ENCODE measurements at regions of chr19 and their contacts with region 1.

Region 1: DNA sequence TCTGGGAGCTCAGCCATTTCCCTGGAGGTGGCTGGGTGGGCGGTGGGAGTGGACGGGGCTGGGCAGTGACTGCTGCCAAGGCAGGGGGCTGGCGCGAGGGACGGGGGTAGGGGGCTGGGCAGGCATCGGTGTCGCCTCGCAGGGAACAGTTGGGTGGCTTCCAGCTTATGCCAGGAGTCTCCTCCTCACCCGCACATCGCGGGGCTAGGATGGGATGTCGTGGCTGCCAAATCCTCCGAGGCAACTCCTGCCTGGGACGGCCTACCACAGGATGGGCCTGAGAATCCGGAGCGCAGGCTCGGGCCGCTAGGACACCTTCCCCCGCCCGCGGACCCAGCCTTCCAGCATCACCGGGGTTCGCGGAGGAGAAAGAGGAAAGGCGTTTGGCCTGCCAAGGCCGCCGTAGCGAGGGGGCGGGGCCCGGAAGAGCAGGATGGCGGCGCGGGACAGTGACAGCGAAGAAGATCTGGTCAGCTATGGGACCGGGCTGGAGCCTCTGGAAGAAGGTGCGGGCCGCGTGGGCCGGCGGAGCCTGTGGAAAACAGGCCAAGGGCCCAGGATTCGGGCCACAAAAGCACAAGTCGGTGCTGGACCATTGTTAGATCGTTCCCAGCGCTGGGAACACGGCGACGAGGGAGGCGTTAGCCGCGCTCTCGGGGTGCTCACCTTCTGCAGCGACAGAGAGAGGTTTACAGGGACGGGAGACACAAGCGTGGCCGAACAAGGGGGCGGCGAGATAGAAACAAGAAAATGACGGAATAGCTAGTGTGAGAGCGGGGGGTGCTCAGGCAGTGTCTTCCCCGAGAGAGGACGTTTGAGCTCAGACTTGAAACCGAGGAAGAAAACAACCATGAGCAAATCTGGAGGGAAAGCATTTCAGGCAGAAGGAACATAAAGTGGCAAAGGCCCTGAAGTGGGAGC is at the start of gene GPATCH1:
- DNase-seq: peak; percentile 90 to 96 (median 92)
- ATAC-seq: peak; percentile 93
- H3K4me3 ChIP-seq: peak within 1 kb of the TSS; percentile 88
- H3K4me1 ChIP-seq: peaks cover 19% of the 10 kb centered on the region
- CTCF ChIP-seq: no peak
- total RNA-seq, gene GPATCH1: 11.9 to 12.4 (median 11.9) TPM

Region 2: GRCh38 chr19:32936065-32936464 is 145.0 kb before region 1 on chr19:
- intact Hi-C with region 1: no loop called
- DNase-seq: no peak
- ATAC-seq: no peak
- H3K4me3 ChIP-seq: no peak overlapping the region
- H3K4me1 ChIP-seq: no peaks in the 10 kb centered on the region
- CTCF ChIP-seq: no peak

Region 3: GRCh38 chr19:32971715-32972540 is 109.1 kb before region 1 on chr19 and contains the starts of genes CEP89 and FAAP24:
- intact Hi-C with region 1: loop called in 1 of 2 experiments (anchors 10 kb)
- DNase-seq: peak; percentile 98 to 99 (median 99)
- ATAC-seq: peak; percentile 97
- H3K4me3 ChIP-seq: peak within 1 kb of the TSS; percentile 56
- H3K4me1 ChIP-seq: peaks cover 21% of the 10 kb centered on the region
- CTCF ChIP-seq: peak; percentile 17
- total RNA-seq, gene CEP89: 12.6 to 19.0 (median 16.1) TPM
- total RNA-seq, gene FAAP24: 1.1 to 3.4 (median 1.5) TPM